ENCODE measurements at regions of chr22 and their contacts with region 1.

Region 1: DNA sequence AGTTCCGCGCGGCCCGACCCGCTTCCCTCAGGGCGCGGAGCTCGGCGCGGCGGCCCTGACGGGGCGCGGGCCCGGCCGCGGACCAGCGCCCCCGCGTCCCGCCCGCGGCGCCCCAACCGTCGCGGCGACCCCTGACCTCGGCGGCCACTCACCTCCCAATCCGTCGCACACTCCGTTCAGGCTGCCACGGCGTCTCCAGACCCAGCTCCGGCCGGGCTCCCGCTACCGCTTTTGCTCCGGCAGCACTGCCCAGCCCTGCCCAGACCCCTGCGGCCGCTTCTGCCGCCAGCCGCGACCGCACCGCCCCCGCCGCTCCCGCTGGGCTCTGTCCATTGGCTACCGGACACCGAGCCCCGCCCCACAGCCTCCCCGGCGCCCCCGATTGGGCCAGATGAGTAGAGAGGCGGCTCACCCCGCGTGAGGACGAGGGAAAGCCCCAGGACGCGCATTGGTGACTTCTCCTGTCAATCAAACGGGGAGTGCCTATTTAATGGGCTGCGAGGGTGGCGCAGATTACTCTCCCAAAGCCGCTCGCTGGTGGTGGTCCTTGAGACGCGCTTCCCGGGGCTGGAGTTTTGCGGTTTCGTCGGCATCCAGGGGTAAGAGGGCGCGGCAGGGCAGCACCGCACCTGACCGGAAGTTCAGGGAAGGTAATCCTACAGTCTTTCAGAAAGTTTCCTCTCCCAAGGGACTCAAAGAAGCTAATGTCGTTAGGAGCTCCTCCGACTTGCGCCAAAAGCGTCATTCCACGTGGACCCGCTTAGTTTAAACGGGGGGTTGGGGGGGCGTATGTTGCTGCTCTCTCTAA is at the start of gene PACSIN2:
- DNase-seq: peak; percentile 99 to 100 (median 100)
- ATAC-seq: peak; percentile 97
- H3K4me3 ChIP-seq: peak within 1 kb of the TSS; percentile 61
- H3K4me1 ChIP-seq: peaks cover 46% of the 10 kb centered on the region
- CTCF ChIP-seq: no peak
- total RNA-seq, gene PACSIN2: 132 to 184 (median 152) TPM

Region 2: DNA sequence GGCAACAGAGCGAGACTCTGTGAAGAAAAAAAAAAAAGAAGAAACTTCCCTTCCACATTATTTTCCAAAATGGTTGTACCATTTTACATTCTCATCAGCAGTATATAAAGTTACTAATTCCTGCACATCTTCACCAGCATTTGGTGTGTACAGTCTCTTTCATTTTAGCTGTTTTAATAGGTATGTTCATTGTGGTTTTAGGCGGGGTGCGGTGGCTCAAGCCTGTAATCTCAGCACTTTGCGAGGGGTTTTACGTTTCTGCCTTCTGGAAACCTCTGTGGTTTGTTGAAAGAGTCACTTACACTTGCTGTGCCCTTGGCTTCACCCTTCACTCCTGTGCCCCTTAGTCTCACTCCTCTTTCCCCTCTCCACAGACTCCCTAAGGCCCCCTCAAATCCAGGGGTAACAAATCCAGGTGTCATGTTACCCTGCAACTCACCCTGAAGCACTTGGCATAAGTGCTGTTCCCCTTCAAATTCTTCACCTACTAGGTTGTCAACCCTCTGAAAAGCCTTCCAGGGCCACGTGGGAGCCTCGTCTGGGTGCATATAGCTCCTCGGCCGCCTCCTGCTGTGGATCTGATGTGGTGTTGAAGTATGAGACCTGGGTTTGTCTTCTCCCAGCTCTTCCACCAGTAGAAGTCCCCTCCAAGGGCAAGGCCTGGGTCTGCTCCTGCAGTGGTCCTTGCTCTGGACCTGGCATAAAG is 1589.3 kb before region 1 on chr22:
- intact Hi-C with region 1: no loop called
- DNase-seq: no peak
- ATAC-seq: peak; percentile 25
- H3K4me3 ChIP-seq: no peak overlapping the region
- H3K4me1 ChIP-seq: no peaks in the 10 kb centered on the region
- CTCF ChIP-seq: no peak

Region 3: DNA sequence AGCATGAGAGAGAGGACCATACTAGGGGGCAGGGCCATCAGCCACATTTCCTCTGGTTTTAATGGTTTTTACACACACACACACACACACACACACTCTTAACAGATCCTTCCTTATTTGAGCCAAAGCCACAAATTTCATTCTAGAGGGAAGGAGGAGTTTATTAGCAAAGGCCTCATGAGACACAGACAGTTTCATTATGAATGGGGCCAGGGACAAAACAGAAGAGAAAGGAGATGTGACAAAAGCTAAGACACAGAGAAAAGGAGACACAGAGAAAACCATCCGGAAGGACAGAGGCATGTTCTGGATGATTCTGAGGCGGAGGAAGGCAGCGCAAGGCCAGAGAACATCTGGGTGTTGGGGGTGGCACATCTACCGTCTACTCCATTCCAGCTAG is 125.8 kb before region 1 on chr22:
- intact Hi-C with region 1: loop called in 1 of 2 experiments (anchors 10 kb)
- DNase-seq: no peak
- ATAC-seq: no peak
- H3K4me3 ChIP-seq: no peak overlapping the region
- H3K4me1 ChIP-seq: peaks cover 12% of the 10 kb centered on the region
- CTCF ChIP-seq: no peak